PC-9 (cell line): ENCODE measurements at regions of chrX and their contacts with region 1.

Region 1: GRCh38 chrX:155216179-155216939 is at the start of gene VBP1:
- DNase-seq: peak; percentile 89 to 93
- H3K4me3 ChIP-seq: peak within 1 kb of the TSS; percentile 81
- H3K27ac ChIP-seq: peak within 1 kb of the TSS; percentile 58
- H3K4me1 ChIP-seq: peaks cover 10% of the 10 kb centered on the region
- H3K27me3 ChIP-seq: no peaks in the 10 kb centered on the region
- CTCF ChIP-seq: peak; percentile 63; the same call in 1 of the 2 replicates
- total RNA-seq, gene VBP1: 68.9 and 87.8 TPM in 2 replicates

Region 2: GRCh38 chrX:154961947-154962346 is 254.4 kb before region 1 on chrX:
- CTCF ChIA-PET with region 1: no interaction called
- POLR2A ChIA-PET with region 1: interaction called, 11 read pairs
- intact Hi-C with region 1: no loop called
- DNase-seq: no peak
- H3K4me3 ChIP-seq: no peak overlapping the region
- H3K27ac ChIP-seq: no peak overlapping the region
- H3K4me1 ChIP-seq: no peaks in the 10 kb centered on the region
- H3K27me3 ChIP-seq: no peaks in the 10 kb centered on the region
- CTCF ChIP-seq: no peak

Region 3: GRCh38 chrX:155094468-155095061 is 121.8 kb before region 1 on chrX:
- CTCF ChIA-PET with region 1: no interaction called
- POLR2A ChIA-PET with region 1: no interaction called
- intact Hi-C with region 1: loop called (anchors 10 kb)
- DNase-seq: peak in 1 of 2 experiments; percentile 7
- H3K4me3 ChIP-seq: no peak overlapping the region
- H3K27ac ChIP-seq: no peak overlapping the region
- H3K4me1 ChIP-seq: no peaks in the 10 kb centered on the region
- H3K27me3 ChIP-seq: no peaks in the 10 kb centered on the region
- CTCF ChIP-seq: peak; percentile 76

Region 4: GRCh38 chrX:155148724-155149537 is 67.4 kb before region 1 on chrX:
- CTCF ChIA-PET with region 1: no interaction called
- POLR2A ChIA-PET with region 1: no interaction called
- intact Hi-C with region 1: no loop called
- DNase-seq: no peak
- H3K4me3 ChIP-seq: no peak overlapping the region
- H3K27ac ChIP-seq: no peak overlapping the region
- H3K4me1 ChIP-seq: no peaks in the 10 kb centered on the region
- H3K27me3 ChIP-seq: no peaks in the 10 kb centered on the region
- CTCF ChIP-seq: peak; percentile 62

Region 5: DNA sequence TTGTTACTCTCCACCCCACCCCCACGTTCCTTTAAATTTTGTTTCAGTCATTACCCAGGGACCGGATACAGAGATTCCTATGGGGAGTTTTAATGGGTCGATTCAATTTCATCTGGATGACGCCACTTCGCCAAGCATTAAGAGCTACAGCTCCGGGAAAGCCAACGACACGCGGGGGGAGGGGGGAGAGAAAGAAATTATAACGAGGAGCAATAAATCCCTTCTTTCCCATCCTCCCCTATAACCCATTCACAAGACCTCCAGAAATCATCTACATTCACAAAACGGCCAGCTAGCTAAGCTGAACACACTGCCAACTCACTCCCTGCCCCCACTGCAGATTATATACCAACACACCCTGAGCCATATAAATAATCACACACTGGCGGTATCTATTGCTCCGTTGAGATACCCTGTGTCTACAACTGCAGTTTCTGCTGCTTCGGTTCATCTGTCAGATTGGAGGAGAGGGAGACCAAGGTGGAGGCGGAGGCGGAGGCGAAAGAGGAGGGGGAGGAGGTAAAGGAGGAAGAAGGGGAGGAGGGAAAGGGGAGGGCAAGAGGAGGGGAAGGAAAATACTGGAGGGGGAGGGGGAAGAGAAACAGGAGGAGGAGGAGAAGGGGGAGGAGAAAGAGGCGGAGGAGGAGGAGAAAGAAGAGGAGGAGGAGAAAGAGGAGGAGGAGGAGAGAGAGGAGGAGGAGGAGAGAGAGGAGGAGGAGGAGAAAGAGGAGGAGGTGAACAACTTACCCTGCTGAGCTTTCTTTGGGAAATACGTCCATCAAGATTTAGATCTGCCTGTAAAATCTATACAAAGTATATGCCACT is 550.9 kb after region 1 on chrX:
- CTCF ChIA-PET with region 1: no interaction called
- POLR2A ChIA-PET with region 1: no interaction called
- intact Hi-C with region 1: loop called (anchors 1 kb)
- DNase-seq: peak; percentile 65 to 73
- H3K4me3 ChIP-seq: peak overlapping the region; percentile 79
- H3K27ac ChIP-seq: no peak overlapping the region
- H3K4me1 ChIP-seq: peaks cover 19% of the 10 kb centered on the region
- H3K27me3 ChIP-seq: no peaks in the 10 kb centered on the region
- CTCF ChIP-seq: no peak